Activated CD4-positive, alpha-beta memory T cell treated with anti-CD3 and anti-CD28 coated beads, Interleukin-2, amount 10 ng/mL, durations not matched to agents 7 days and 5 days (primary cell): ENCODE measurements at regions of chr4 and their contacts with region 1.

Region 1: DNA sequence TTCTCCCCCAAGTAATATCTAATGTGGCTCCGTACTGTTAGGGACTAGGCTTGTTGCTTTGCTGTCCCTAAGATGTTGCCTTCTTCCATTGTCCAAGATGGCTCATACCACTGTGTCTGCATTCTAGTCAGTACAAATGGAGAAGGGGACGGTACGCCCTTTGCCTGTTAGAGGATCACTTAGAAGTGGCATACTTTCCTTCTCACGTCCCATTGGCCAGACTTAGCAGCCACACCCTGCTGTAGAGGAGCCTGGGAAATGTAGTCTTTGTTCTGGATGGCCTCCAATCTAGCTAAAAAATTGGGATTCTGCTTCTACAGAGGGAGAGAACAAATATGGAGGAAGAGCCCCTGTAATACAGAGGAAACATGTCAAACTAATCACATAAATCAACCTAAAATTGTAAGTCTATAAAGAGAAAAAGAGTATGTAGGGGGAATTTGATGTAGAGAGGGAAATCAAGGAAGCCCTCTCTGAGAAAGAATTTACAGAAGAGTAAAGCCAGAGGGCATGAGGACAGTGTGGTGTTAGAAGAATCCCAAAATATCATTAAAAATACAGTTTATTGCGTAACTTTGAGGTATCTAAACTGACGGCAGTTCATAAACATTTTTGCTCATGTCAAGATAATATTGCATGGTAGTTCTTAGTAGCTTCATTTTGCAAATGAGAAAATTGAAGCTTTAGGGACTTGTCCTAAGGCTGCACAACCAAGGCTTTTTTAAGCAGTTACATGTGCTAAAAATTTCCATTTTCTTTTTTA is 15.1 kb downstream of the PRIMPOL start:
- DNase-seq: no peak
- H3K4me3 Mint-ChIP-seq: no peak overlapping the region
- H3K27ac Mint-ChIP-seq: no peak overlapping the region
- H3K4me1 Mint-ChIP-seq: peaks cover 30% of the 10 kb centered on the region
- H3K27me3 Mint-ChIP-seq: no peaks in the 10 kb centered on the region

Region 2: GRCh38 chr4:184616633-184617551 is 47.7 kb before region 1 on chr4:
- CTCF ChIA-PET with region 1: no interaction called
- POLR2A ChIA-PET with region 1: no interaction called
- DNase-seq: no peak
- H3K4me3 Mint-ChIP-seq: no peak overlapping the region
- H3K27ac Mint-ChIP-seq: no peak overlapping the region
- H3K4me1 Mint-ChIP-seq: no peaks in the 10 kb centered on the region
- H3K27me3 Mint-ChIP-seq: no peaks in the 10 kb centered on the region

Region 3: GRCh38 chr4:184695178-184695896 is 30.7 kb after region 1 on chr4:
- CTCF ChIA-PET with region 1: interaction called, 3 read pairs
- POLR2A ChIA-PET with region 1: interaction called, 11 read pairs
- DNase-seq: no peak
- H3K4me3 Mint-ChIP-seq: no peak overlapping the region
- H3K27ac Mint-ChIP-seq: peak overlapping the region; percentile 11
- H3K4me1 Mint-ChIP-seq: peaks cover 5% of the 10 kb centered on the region
- H3K27me3 Mint-ChIP-seq: no peaks in the 10 kb centered on the region